Activated B cell treated with CpG ODN at 0.5 μM for 24 hours (primary cell): ENCODE measurements at regions of chr22 and their contacts with region 1.

Region 1: DNA sequence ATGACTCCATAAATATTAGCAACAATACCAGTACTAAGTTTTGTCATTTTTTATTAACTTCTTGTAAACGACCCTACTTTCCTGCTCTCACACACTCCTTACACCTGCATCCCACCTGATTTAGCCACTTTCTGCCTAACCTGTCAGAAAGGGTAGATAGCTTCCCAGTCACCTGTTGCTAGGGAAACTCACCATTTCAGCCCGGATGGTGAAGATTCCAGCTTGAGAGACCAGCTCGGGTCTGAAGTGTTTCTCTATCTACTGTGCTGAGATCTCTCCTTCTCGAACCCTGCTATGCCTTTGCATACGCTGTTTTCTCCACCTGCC is at the start of gene PARVG:
- DNase-seq: no peak
- ATAC-seq: peak; percentile 63
- H3K4me3 Mint-ChIP-seq: peak within 1 kb of the TSS; percentile 90
- H3K27ac Mint-ChIP-seq: peak within 1 kb of the TSS; percentile 95
- H3K4me1 Mint-ChIP-seq: peaks cover 40% of the 10 kb centered on the region
- H3K27me3 Mint-ChIP-seq: no peaks in the 10 kb centered on the region
- CTCF ChIP-seq: no peak
- total RNA-seq, gene PARVG: 91.6 and 96.1 TPM in 2 replicates

Region 2: GRCh38 chr22:43993027-43993760 is 187.5 kb before region 1 on chr22:
- CTCF ChIA-PET with region 1: interaction called, 6 read pairs
- POLR2A ChIA-PET with region 1: interaction called, 5 read pairs
- intact Hi-C with region 1: loop called (anchors 5 kb)
- DNase-seq: peak; percentile 53
- ATAC-seq: peak; percentile 74
- H3K4me3 Mint-ChIP-seq: peak overlapping the region; percentile 39
- H3K27ac Mint-ChIP-seq: peak overlapping the region; percentile 59
- H3K4me1 Mint-ChIP-seq: peaks cover 46% of the 10 kb centered on the region
- H3K27me3 Mint-ChIP-seq: no peaks in the 10 kb centered on the region
- CTCF ChIP-seq: peak; percentile 66

Region 3: DNA sequence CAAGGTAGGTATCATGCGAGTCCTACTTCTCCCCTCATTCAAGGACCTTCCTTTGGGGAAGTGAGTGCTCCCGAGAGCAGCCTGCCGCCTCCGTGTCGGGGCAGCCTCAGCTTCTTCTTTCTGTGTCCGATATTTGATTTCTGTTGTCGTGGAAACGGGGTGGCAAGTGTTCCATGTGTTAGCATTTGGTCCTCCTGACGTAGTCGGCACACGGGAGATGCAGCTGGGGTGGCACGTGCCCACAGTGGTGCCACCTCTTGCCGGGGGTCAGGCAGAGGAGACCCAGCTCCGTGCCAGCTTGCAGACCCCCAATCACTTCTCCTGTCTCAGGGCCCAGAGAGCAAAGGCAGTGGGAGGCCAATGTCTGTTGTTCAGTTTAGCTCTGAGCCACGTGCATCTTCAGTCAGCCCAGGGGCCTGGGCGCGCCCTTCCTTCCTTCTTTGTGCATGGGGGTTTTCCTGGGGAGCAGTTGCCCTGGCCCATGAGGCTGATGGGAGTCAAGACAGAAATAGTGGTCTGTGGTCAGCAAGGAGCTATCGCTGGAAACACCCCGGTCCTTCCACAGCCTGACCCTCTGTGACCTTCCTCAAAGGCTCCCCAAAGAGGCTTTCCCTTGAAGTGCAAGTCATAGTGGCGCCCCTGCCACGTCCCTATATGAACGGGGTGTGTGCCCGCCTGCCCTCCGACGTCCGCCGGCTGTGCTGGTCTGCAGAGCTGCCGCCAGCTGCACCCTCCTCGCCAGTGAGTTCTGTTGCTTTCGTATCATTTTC is 112.1 kb before region 1 on chr22:
- CTCF ChIA-PET with region 1: no interaction called
- POLR2A ChIA-PET with region 1: interaction called, 3 read pairs
- intact Hi-C with region 1: loop called (anchors 5 kb)
- DNase-seq: peak; percentile 56
- ATAC-seq: peak; percentile 62
- H3K4me3 Mint-ChIP-seq: peak overlapping the region; percentile 76
- H3K27ac Mint-ChIP-seq: peak overlapping the region; percentile 94
- H3K4me1 Mint-ChIP-seq: peaks cover 65% of the 10 kb centered on the region
- H3K27me3 Mint-ChIP-seq: no peaks in the 10 kb centered on the region
- CTCF ChIP-seq: no peak

Region 4: GRCh38 chr22:44204739-44205515 is 24.3 kb after region 1 on chr22:
- CTCF ChIA-PET with region 1: no interaction called
- POLR2A ChIA-PET with region 1: interaction called, 18 read pairs
- intact Hi-C with region 1: no loop called
- DNase-seq: peak; percentile 37
- ATAC-seq: peak; percentile 94
- H3K4me3 Mint-ChIP-seq: peak overlapping the region; percentile 42
- H3K27ac Mint-ChIP-seq: peak overlapping the region; percentile 30
- H3K4me1 Mint-ChIP-seq: peaks cover 47% of the 10 kb centered on the region
- H3K27me3 Mint-ChIP-seq: no peaks in the 10 kb centered on the region
- CTCF ChIP-seq: no peak

Region 5: DNA sequence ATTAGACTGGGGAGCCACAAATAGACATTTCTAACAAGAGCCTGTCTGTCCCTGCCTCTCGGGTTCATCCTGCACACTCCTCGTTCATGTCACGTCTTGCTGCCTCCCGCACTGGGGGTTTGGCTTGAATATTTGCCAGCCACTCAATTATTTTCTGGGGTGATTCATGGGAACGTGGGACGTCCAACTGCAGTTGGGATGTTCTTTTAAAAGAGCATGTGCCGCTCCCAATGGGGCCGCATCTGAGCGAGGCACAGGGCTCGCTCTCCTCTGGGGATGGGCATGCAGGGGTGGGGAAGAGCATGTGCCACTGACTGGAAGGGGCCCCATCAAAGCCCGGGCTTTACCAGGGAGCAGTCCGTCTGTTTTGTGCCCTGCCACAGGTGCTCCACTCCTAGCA is 43.5 kb after region 1 on chr22:
- CTCF ChIA-PET with region 1: no interaction called
- POLR2A ChIA-PET with region 1: no interaction called
- intact Hi-C with region 1: no loop called
- DNase-seq: no peak
- ATAC-seq: no peak
- H3K4me3 Mint-ChIP-seq: no peak overlapping the region
- H3K27ac Mint-ChIP-seq: no peak overlapping the region
- H3K4me1 Mint-ChIP-seq: no peaks in the 10 kb centered on the region
- H3K27me3 Mint-ChIP-seq: peaks cover 27% of the 10 kb centered on the region
- CTCF ChIP-seq: no peak

Region 6: GRCh38 chr22:44497218-44497904 is 316.7 kb after region 1 on chr22:
- CTCF ChIA-PET with region 1: no interaction called
- POLR2A ChIA-PET with region 1: no interaction called
- intact Hi-C with region 1: loop called (anchors 10 kb)
- DNase-seq: no peak
- ATAC-seq: no peak
- H3K4me3 Mint-ChIP-seq: peak overlapping the region; percentile 81
- H3K27ac Mint-ChIP-seq: no peak overlapping the region
- H3K4me1 Mint-ChIP-seq: peaks cover 11% of the 10 kb centered on the region
- H3K27me3 Mint-ChIP-seq: peaks cover 11% of the 10 kb centered on the region
- CTCF ChIP-seq: no peak